GM10248 (cell line): ENCODE measurements at regions of chr6 and their contacts with region 1.

Region 1: GRCh38 chr6:106141441-106142237 is 55.5 kb downstream of the PRDM1 start:
- DNase-seq: peak; percentile 62
- CTCF ChIP-seq: no peak

Region 2: DNA sequence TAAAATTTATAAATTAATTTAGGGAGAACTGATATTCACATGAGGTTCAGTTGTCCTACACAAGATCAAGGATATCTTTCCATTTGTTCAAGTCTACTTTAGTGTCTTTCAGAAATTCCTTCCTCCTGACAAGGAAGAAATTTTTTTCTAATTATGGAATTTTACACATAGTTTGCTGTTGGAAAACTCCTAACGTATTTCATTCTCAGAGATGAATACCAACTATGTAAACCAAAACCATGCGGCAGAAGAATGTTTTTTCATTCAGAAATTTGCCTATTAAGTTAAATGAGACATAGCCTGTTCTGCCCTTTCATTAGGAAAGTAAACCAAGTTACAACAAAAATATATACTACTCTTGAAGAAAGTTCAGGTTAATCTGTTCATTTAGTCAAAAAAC is 166.7 kb before region 1 on chr6:
- CTCF ChIA-PET with region 1: no interaction called
- POLR2A ChIA-PET with region 1: no interaction called
- DNase-seq: no peak
- CTCF ChIP-seq: no peak

Region 3: GRCh38 chr6:106128981-106129781 is 12.5 kb before region 1 on chr6:
- CTCF ChIA-PET with region 1: interaction called, 19 read pairs
- POLR2A ChIA-PET with region 1: no interaction called
- DNase-seq: no peak
- CTCF ChIP-seq: no peak

Region 4: DNA sequence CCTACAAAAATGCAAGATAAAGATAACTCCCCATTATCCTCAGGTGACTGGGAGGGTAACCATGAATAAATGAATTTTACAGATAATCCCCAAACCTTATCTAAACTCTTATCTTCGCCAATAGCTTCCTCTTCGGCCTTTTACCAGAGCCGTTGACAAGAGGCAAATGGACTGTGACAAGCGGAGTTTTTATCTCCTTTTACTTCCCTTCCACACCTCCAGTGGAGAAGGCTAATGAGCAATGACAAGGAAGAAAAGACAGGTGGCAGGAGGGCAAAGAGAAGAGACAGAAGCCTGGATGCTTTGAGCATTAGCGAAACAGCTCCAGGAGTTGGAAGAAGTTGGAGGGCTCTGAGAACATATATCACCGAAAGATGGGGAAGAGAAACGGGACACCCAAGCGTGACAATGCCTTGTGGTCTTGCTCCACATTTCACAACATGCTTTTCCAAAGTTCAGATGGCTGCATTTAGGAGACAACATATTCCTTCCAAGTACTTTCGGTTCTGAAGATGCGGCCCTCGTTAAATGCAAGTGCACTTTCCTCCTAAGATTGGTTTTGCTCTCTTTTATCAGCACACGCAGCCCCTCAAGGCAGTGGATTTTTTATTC is 13.7 kb after region 1 on chr6:
- CTCF ChIA-PET with region 1: interaction called, 22 read pairs
- POLR2A ChIA-PET with region 1: no interaction called
- DNase-seq: no peak
- CTCF ChIP-seq: no peak

Region 5: DNA sequence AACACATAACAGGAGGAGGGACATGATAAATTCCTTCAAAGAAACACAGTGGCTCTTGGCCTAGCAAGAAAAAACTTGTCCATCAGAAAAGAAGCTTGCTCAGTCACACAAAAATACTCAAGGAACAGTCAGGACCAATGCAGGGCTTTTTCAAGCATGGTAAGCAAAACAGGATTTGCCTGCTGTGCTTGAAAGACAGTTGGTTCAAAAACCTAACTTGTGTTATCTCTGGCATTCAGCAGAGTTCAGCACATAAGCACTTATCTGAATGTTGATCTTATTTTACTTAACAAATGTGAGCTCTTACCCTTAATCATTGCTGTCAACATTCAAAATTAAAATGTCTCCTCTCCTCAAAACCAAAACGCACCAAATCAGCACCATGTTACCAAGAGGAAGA is 145.6 kb after region 1 on chr6:
- CTCF ChIA-PET with region 1: no interaction called
- POLR2A ChIA-PET with region 1: no interaction called
- DNase-seq: no peak
- CTCF ChIP-seq: no peak